Activated T-helper 1 cell treated with anti-CD3 and anti-CD28 coated beads, Interleukin-12 subunit alpha, Interleukin-12 subunit beta, Interleukin-2, Interleukin-4 antibody, amounts not matched to agents 30 ng/mL and 10 ng/mL and 1 ng/mL, durations not matched to agents 14 hours and 24 hours and 36 hours (primary cell): ENCODE measurements at regions of chr1 and their contacts with region 1.

Region 1: GRCh38 chr1:160681067-160681890 is 30.3 kb downstream of the CD48 start:
- DNase-seq: peak; percentile 78
- H3K4me3 Mint-ChIP-seq: peak overlapping the region; percentile 60
- H3K27ac Mint-ChIP-seq: peak overlapping the region; percentile 85
- H3K4me1 Mint-ChIP-seq: peaks cover 81% of the 10 kb centered on the region
- H3K27me3 Mint-ChIP-seq: no peaks in the 10 kb centered on the region

Region 2: GRCh38 chr1:160711602-160712311 is 30.5 kb after region 1 on chr1 and contains the start of gene CD48:
- intact Hi-C with region 1: loop called (anchors 1 kb)
- DNase-seq: peak; percentile 41
- H3K4me3 Mint-ChIP-seq: no peak within 1 kb of the TSS
- H3K27ac Mint-ChIP-seq: no peak within 1 kb of the TSS
- H3K4me1 Mint-ChIP-seq: peaks cover 26% of the 10 kb centered on the region
- H3K27me3 Mint-ChIP-seq: no peaks in the 10 kb centered on the region
- total RNA-seq, gene CD48: 219 and 222 TPM in 2 replicates

Region 3: GRCh38 chr1:160830321-160831153 is 149.3 kb after region 1 on chr1:
- intact Hi-C with region 1: loop called (anchors 1 kb)
- DNase-seq: peak; percentile 65
- H3K4me3 Mint-ChIP-seq: no peak overlapping the region
- H3K27ac Mint-ChIP-seq: no peak overlapping the region
- H3K4me1 Mint-ChIP-seq: peaks cover 26% of the 10 kb centered on the region
- H3K27me3 Mint-ChIP-seq: peaks cover 3% of the 10 kb centered on the region

Region 4: DNA sequence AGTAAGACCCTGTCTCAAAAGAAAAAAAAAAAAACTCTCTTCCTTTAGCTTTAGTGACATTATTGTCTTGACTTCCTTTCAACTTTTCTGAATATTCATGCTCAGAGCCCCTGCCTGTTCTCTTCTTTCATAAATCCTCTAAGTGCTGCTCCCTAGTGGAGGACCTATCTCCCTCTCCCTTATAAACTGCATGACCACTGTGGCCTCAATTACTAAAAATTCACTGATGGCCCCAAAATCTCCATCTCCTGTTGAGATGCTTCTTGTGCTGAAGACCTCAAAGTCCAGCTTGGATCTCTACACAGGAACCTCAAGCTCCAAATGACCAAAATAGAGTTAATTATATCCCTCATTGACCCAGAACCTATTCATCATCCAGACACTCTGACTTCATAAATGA is 195.9 kb after region 1 on chr1:
- intact Hi-C with region 1: loop called (anchors 5 kb)
- DNase-seq: no peak
- H3K4me3 Mint-ChIP-seq: no peak overlapping the region
- H3K27ac Mint-ChIP-seq: no peak overlapping the region
- H3K4me1 Mint-ChIP-seq: peaks cover 16% of the 10 kb centered on the region
- H3K27me3 Mint-ChIP-seq: no peaks in the 10 kb centered on the region

Region 5: GRCh38 chr1:160951443-160952128 is 270.3 kb after region 1 on chr1:
- intact Hi-C with region 1: loop called (anchors 1 kb)
- DNase-seq: peak; percentile 52
- H3K4me3 Mint-ChIP-seq: no peak overlapping the region
- H3K27ac Mint-ChIP-seq: no peak overlapping the region
- H3K4me1 Mint-ChIP-seq: peaks cover 11% of the 10 kb centered on the region
- H3K27me3 Mint-ChIP-seq: peaks cover 6% of the 10 kb centered on the region

Region 6: DNA sequence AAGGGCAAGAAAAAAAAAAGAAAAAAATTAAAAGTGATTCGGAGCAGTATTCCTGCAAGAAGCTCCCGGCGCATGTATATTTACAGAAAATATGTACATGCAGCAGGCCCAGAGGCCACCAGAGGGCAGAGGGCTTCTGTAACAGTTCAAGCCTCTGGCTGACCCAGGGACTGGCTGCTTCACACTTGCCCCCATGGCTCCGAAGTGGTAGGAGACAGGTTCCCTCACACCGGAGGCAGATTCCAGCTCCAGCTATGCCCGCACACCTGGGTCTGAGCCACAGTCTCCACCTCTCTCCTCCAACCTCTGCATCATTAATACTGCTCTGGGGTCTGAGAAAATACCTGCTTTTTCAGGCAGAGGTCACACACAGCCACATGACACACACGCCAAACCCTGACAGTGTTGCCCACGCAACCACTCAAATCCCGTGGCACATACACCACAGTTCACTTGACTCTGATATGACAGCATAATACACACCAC is 390.6 kb after region 1 on chr1:
- intact Hi-C with region 1: no loop called
- DNase-seq: peak; percentile 24
- H3K4me3 Mint-ChIP-seq: no peak overlapping the region
- H3K27ac Mint-ChIP-seq: peak overlapping the region; percentile 47
- H3K4me1 Mint-ChIP-seq: peaks cover 49% of the 10 kb centered on the region
- H3K27me3 Mint-ChIP-seq: no peaks in the 10 kb centered on the region